Mammary epithelial cell (primary cell): ENCODE measurements at regions of chr2 and their contacts with region 1.

Region 1: DNA sequence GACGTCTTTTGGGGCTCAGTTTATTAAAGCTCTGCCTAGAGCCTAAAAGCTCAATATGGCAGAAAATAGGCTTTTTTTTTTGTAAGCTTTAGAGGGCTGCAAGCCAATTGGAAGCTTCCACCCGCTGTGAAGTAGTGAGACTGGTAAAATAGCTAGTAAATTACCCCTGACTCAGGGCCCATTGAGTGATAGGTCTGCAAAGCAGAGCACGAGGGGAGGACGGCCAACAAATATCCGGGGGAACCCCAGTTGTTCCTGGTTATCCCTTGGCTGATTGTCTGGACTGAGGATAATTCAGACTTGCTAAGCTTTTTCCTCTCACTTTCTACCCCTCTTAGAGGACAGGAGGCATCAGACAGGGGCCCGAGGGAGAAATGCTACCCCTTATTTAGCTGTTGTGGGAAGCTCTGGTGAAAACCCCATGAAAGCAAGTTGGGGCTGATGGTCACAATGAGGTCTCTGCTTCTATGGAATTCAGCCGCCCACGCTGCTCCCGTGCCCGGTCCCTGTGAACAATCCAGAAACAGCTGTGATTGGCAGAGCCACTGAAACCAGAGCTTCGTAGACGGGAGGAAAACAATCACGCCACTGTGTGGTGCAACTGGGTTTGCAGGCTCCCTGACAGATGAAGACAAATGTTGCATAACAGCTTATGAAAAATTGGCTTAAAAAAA is 141.9 kb upstream of the LGALSL start:
- DNase-seq: peak; percentile 98
- H3K4me3 ChIP-seq: no peak overlapping the region
- H3K27ac ChIP-seq: peak overlapping the region; percentile 99
- H3K4me1 ChIP-seq: peaks cover 26% of the 10 kb centered on the region
- H3K27me3 ChIP-seq: no peaks in the 10 kb centered on the region
- CTCF ChIP-seq: peak; percentile 48 to 76

Region 2: GRCh38 chr2:64036034-64036705 is 275.9 kb before region 1 on chr2:
- CTCF ChIA-PET with region 1: no interaction called
- dilution Hi-C with region 1: no loop called
- in situ Hi-C with region 1: loop called in 1 of 2 experiments (anchors 10 kb)
- intact Hi-C with region 1: no loop called
- DNase-seq: peak; percentile 78
- H3K4me3 ChIP-seq: no peak overlapping the region
- H3K27ac ChIP-seq: no peak overlapping the region
- H3K4me1 ChIP-seq: peaks cover 8% of the 10 kb centered on the region
- H3K27me3 ChIP-seq: no peaks in the 10 kb centered on the region
- CTCF ChIP-seq: no peak

Region 3: DNA sequence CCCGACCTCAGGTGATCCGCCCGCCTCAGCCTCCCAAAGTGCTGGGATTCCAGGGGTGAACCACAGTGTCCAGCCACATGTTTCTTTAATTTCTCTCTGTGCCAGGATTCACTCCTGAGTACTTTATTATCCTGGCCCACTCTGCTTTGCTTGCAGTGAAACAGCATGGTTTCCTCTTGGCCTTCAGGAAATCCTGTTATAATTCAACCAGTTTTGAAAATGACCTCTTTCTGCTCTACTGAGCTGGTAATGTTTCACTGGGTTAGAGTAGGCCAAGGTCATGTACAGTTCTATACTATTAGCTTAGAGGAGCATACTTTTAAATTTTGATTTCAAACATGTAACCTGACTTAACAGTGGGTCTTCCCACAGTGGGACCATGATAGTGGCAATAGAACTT is 77.3 kb before region 1 on chr2:
- CTCF ChIA-PET with region 1: interaction called, 3 read pairs
- dilution Hi-C with region 1: no loop called
- in situ Hi-C with region 1: no loop called
- intact Hi-C with region 1: loop called (anchors 5 kb)
- DNase-seq: no peak
- H3K4me3 ChIP-seq: no peak overlapping the region
- H3K27ac ChIP-seq: no peak overlapping the region
- H3K4me1 ChIP-seq: peaks cover 9% of the 10 kb centered on the region
- H3K27me3 ChIP-seq: no peaks in the 10 kb centered on the region
- CTCF ChIP-seq: no peak

Region 4: GRCh38 chr2:66127061-66127460 is 1815.0 kb after region 1 on chr2:
- CTCF ChIA-PET with region 1: no interaction called
- dilution Hi-C with region 1: no loop called
- in situ Hi-C with region 1: no loop called
- intact Hi-C with region 1: no loop called
- DNase-seq: no peak
- H3K4me3 ChIP-seq: no peak overlapping the region
- H3K27ac ChIP-seq: no peak overlapping the region
- H3K4me1 ChIP-seq: no peaks in the 10 kb centered on the region
- H3K27me3 ChIP-seq: no peaks in the 10 kb centered on the region
- CTCF ChIP-seq: no peak